GM12878 (cell line): ENCODE measurements at regions of chr10 and their contacts with region 1.

Region 1: GRCh38 chr10:59762505-59762904 is 9.2 kb upstream of the MRLN start:
- DNase-seq: no peak
- ATAC-seq: no peak
- H3K4me3 ChIP-seq: no peak overlapping the region
- H3K27ac ChIP-seq: no peak overlapping the region
- H3K4me1 ChIP-seq: no peaks in the 10 kb centered on the region
- H3K27me3 ChIP-seq: no peaks in the 10 kb centered on the region; a peak in 1 of 4 replicates
- CTCF ChIP-seq: no peak
- EP300 ChIP-seq: no peak
- POLR2A ChIP-seq: no peak
- RAD21 ChIP-seq: no peak

Region 2: GRCh38 chr10:59265141-59265540 is 497.4 kb before region 1 on chr10:
- CTCF ChIA-PET with region 1: no interaction called
- POLR2A ChIA-PET with region 1: no interaction called
- RAD21 ChIA-PET with region 1: no interaction called
- SMC1A ChIA-PET with region 1: no interaction called
- in situ Hi-C with region 1: no loop called
- intact Hi-C with region 1: no loop called
- DNase-seq: no peak
- ATAC-seq: no peak
- H3K4me3 ChIP-seq: no peak overlapping the region
- H3K27ac ChIP-seq: no peak overlapping the region
- H3K4me1 ChIP-seq: no peaks in the 10 kb centered on the region
- H3K27me3 ChIP-seq: no peaks in the 10 kb centered on the region
- CTCF ChIP-seq: no peak
- EP300 ChIP-seq: no peak
- POLR2A ChIP-seq: no peak
- RAD21 ChIP-seq: no peak

Region 3: GRCh38 chr10:59517996-59518395 is 244.5 kb before region 1 on chr10:
- CTCF ChIA-PET with region 1: no interaction called
- POLR2A ChIA-PET with region 1: no interaction called
- RAD21 ChIA-PET with region 1: no interaction called
- SMC1A ChIA-PET with region 1: no interaction called
- in situ Hi-C with region 1: no loop called
- intact Hi-C with region 1: loop called (anchors 5 kb)
- DNase-seq: no peak
- ATAC-seq: no peak
- H3K4me3 ChIP-seq: no peak overlapping the region
- H3K27ac ChIP-seq: no peak overlapping the region
- H3K4me1 ChIP-seq: no peaks in the 10 kb centered on the region
- H3K27me3 ChIP-seq: no peaks in the 10 kb centered on the region; a peak in 2 of 4 replicates
- CTCF ChIP-seq: no peak
- EP300 ChIP-seq: no peak
- POLR2A ChIP-seq: no peak
- RAD21 ChIP-seq: no peak